ENCODE measurements at regions of chr7 and their contacts with region 1.

Region 1: GRCh38 chr7:85041605-85042216 is 145.1 kb downstream of the SEMA3D start:
- DNase-seq: no peak
- H3K4me3 ChIP-seq: no peak overlapping the region
- CTCF ChIP-seq: peak; percentile 71

Region 2: DNA sequence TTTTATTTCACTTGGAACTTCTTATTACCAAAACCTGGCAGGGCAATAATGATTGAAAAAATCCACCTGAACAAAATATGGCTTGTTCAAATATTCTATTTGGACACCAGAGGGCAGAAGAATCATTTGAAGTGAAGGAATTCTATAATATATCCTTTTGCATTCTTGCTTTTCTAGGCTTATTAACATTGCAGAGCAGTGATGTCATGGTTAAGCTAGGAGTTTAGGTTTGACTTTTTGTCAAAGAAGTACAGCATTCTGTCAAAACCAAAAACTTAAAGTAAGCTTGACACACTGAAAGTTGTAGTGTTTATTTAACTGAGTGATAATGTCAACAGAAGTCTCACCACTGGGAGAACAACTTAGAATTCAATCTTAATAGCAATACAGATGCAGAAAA is 10.8 kb before region 1 on chr7:
- CTCF ChIA-PET with region 1: interaction called, 14 read pairs
- POLR2A ChIA-PET with region 1: no interaction called
- DNase-seq: peak; percentile 26
- H3K4me3 ChIP-seq: no peak overlapping the region
- CTCF ChIP-seq: peak; percentile 8

Region 3: GRCh38 chr7:85065306-85065705 is 23.6 kb after region 1 on chr7:
- CTCF ChIA-PET with region 1: interaction called, 10 read pairs
- POLR2A ChIA-PET with region 1: no interaction called
- DNase-seq: no peak
- H3K4me3 ChIP-seq: no peak overlapping the region
- CTCF ChIP-seq: no peak

Region 4: GRCh38 chr7:85186521-85187241 is 145.0 kb after region 1 on chr7 and contains the start of gene SEMA3D:
- CTCF ChIA-PET with region 1: interaction called, 83 read pairs
- POLR2A ChIA-PET with region 1: no interaction called
- DNase-seq: no peak
- H3K4me3 ChIP-seq: peak within 1 kb of the TSS; percentile 82
- CTCF ChIP-seq: peak; percentile 96

Region 5: DNA sequence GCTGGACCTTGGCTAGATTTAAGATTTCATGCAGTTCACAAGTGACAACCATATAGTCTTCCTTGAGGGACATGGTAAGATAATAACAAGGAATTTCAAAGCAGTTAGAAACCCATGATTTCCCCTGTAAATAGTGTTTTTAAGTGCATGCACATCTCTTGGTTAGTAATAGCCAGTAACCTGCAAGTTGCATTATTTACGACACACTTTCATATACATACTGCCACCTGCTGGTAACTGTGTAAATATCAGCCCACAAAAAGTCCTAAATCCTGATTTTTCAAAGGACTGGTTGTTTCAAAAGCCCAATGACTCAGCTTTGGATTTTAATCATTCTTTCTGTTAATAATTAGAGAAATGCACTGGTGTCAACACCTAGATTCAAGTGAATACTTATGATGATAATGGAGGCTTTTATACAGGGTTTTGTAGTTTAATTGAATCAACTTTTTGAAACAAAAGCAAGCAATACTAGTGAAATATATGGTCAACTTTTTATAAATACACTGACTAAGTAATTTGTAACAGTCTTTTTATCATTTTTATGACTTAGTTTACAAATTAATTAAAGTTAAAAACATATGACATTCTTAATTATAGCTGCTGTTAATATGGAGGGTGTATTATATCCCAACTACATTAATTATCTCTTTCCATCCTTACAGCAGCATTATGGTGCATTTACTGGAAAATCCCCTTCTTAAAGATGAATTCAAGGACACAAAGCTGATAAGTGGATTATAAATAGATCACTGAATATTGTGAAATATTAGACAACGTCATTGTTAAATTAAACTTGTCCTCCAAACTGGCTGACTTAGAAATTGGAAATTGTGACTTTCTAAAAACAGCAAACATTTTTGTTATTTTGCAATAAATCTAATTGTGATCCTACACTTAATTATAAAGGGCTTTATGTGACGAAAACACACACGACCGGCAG is 512.8 kb after region 1 on chr7:
- CTCF ChIA-PET with region 1: interaction called, 50 read pairs
- POLR2A ChIA-PET with region 1: no interaction called
- DNase-seq: peak; percentile 49
- H3K4me3 ChIP-seq: no peak overlapping the region
- CTCF ChIP-seq: peak; percentile 59

Region 6: GRCh38 chr7:85829817-85830432 is 788.2 kb after region 1 on chr7:
- CTCF ChIA-PET with region 1: interaction called, 29 read pairs
- POLR2A ChIA-PET with region 1: no interaction called
- DNase-seq: no peak
- H3K4me3 ChIP-seq: no peak overlapping the region
- CTCF ChIP-seq: peak; percentile 17

Measured in AG04449 (cell line).